ENCODE measurements at regions of chr6 and their contacts with region 1.

Region 1: DNA sequence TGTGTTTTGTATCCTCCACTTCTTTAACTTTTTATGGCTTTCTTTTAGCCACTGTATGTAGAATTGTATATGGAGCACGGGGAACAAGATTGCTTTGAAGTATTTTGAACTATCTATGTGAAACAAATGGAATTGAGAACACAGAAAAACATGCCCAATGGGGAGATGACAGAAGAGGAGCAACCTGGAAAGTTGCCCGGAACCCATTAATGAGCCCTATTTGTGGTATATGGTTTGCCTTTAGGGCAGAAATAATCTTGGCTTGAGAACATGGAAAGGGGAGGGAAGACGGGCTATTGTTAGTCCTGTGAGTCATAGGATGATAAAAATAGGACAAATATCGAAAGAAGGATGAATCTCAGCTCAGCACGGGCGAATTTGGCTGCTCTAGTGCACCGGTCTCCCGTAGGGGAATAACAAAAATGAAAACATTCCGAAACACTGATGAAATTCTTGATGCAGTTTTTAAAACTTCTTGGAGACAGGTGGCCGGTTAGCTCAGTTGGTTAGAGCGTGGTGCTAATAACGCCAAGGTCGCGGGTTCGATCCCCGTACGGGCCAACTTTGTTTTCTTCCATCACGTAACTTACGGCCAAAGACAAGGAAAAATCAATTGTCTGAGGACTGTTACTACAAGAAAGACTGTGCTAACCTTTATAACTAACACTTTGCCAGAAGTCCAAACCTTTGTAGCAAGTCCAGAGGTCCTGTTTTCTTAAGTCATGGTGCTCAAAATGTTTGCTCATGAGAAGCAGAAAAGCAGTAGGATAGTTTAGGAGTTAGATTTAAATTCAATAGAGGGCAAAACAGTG is 15.7 kb downstream of the HMGN4 start:
- DNase-seq: peak; percentile 79 to 89 (median 87)
- H3K4me3 ChIP-seq: peak overlapping the region; percentile 46
- H3K27ac ChIP-seq: peak overlapping the region; percentile 64 to 72
- H3K4me1 ChIP-seq: peaks cover 3% of the 10 kb centered on the region
- H3K27me3 ChIP-seq: no peaks in the 10 kb centered on the region
- CTCF ChIP-seq: no peak
- EP300 ChIP-seq: no peak
- POLR2A ChIP-seq: no peak

Region 2: GRCh38 chr6:26270903-26271667 is 282.8 kb before region 1 on chr6:
- intact Hi-C with region 1: no loop called
- DNase-seq: peak in 4 of 5 donors; percentile 20 to 65 (median 42)
- H3K4me3 ChIP-seq: peak overlapping the region; percentile 34
- H3K27ac ChIP-seq: peak overlapping the region in 1 of 2 donors; percentile 51
- H3K4me1 ChIP-seq: peaks cover 2% of the 10 kb centered on the region
- H3K27me3 ChIP-seq: no peaks in the 10 kb centered on the region
- CTCF ChIP-seq: no peak
- EP300 ChIP-seq: no peak
- POLR2A ChIP-seq: no peak

Region 3: DNA sequence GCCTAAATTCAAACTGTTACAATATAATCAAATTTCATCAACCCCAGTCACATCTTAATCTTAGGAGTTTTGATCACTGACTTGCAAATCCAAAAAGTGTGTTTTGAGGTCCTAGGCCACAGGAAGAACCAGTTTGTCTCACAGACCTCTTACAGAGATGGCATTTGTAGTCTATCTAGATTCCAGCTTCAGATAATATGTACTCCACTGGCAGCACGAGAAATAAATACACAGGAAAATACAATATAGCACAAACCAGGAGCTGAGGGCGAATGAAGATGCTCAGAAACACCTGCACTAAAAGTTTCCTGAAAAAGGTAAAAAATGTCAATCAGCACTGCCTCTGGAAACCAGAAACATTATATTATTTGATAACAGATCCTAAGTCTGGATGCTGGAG is 114.2 kb before region 1 on chr6:
- intact Hi-C with region 1: no loop called
- DNase-seq: no peak
- H3K4me3 ChIP-seq: peak overlapping the region; percentile 58
- H3K27ac ChIP-seq: peak overlapping the region; percentile 79 to 86
- H3K4me1 ChIP-seq: peaks cover 4% of the 10 kb centered on the region
- H3K27me3 ChIP-seq: no peaks in the 10 kb centered on the region
- CTCF ChIP-seq: no peak
- EP300 ChIP-seq: no peak
- POLR2A ChIP-seq: no peak

Region 4: DNA sequence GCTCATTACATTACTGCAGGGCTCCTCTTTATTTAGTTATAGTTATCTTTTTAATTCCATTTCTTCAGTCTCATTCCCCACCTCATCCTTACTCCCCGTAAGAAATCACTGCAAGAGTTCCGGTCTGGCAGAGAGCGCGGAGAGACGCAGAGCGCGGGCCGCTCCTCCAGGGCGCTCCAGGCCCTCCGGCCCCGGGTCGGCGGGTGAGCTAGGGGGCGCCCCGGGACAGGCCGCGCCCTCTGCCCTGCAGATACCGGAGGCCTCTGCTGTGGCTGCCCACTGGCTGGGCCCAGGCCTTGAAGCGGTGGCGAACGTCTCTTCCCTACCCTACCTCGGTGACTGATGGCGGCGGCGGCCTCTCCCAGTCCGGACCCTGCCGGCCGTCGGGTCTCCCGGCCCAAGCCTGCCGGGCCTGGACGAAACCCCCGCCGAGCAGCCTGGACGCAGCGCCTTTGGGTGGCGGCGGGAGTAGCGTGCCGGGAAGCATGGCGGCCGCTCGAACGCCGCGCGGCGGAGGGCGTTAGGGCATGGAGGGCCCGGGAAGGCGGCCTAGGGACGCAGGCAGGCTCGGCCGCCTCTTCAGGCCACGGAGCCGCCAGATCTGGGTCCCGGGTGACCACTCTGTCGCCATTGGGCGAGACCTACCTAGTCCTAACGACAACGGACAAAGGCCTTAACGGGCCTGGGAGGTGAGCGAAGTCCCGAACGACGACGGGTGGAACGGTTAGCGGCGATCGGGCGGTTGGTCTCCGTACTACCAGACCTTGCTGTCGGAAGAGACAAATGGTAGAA is 32.0 kb before region 1 on chr6:
- intact Hi-C with region 1: loop called in 1 of 4 experiments (anchors 1 kb)
- DNase-seq: peak; percentile 79 to 89 (median 82)
- H3K4me3 ChIP-seq: peak overlapping the region; percentile 61
- H3K27ac ChIP-seq: peak overlapping the region; percentile 97 to 99
- H3K4me1 ChIP-seq: peaks cover 3% of the 10 kb centered on the region
- H3K27me3 ChIP-seq: no peaks in the 10 kb centered on the region
- CTCF ChIP-seq: peak; percentile 21 to 50 (median 36)
- EP300 ChIP-seq: no peak
- POLR2A ChIP-seq: peak; percentile 46

Region 5: DNA sequence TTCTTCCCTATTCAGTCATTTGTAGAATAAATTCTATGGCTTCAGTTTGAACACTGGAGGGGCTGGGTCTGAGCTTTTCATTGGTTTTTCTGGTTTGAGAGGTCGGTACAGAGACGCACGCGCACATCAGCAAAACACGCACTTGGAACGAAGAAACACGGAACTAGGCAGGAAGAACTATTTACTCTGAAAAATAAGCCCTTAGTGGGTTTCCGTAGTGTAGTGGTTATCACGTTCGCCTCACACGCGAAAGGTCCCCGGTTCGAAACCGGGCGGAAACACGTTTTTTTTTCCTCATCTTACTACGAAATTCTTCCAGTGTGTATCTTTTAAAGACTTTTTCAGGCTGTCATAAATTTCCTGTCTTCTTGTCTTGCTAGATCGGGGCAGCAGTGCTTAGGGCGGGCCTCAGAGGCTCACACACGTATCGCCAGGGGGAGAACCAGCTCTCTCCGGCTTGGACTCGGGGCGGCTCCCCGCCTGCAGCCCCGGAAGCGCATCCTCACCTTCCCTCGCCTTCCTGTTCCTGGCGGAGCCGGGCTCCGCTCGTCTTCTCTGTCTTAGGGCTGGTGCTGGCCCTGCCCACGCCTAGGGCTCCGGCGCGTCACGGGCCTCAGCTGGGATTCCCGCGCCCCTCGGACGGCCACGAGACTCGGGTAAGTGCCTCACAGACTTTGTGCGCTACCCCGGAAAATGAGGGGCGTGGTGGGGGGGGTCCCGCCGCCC is 15.8 kb before region 1 on chr6 and contains the start of gene HMGN4:
- intact Hi-C with region 1: loop called in 1 of 4 experiments (anchors 2 kb)
- DNase-seq: peak; percentile 83 to 90 (median 87)
- H3K4me3 ChIP-seq: peak within 1 kb of the TSS; percentile 86
- H3K27ac ChIP-seq: peak within 1 kb of the TSS; percentile 83 to 92
- H3K4me1 ChIP-seq: peaks cover 4% of the 10 kb centered on the region
- H3K27me3 ChIP-seq: no peaks in the 10 kb centered on the region
- CTCF ChIP-seq: peak in 1 of 3 donors; percentile 15
- EP300 ChIP-seq: no peak
- POLR2A ChIP-seq: peak; percentile 51
- total RNA-seq, gene HMGN4: 48.6 to 78.9 (median 58.4) TPM

Region 6: GRCh38 chr6:26651133-26651781 is 97.4 kb after region 1 on chr6:
- intact Hi-C with region 1: no loop called
- DNase-seq: no peak
- H3K4me3 ChIP-seq: no peak overlapping the region
- H3K27ac ChIP-seq: no peak overlapping the region
- H3K4me1 ChIP-seq: no peaks in the 10 kb centered on the region
- H3K27me3 ChIP-seq: no peaks in the 10 kb centered on the region
- CTCF ChIP-seq: no peak
- EP300 ChIP-seq: no peak
- POLR2A ChIP-seq: no peak